HepG2 (cell line): ENCODE measurements at regions of chr2 and their contacts with region 1.

Region 1: GRCh38 chr2:27095745-27096651 is 9.4 kb downstream of the KHK start:
- DNase-seq: peak; percentile 97
- ATAC-seq: peak; percentile 64
- H3K4me3 ChIP-seq: peak overlapping the region; percentile 33 to 61 (median 35); a peak in 5 of 6 replicates
- H3K27ac ChIP-seq: peak overlapping the region; percentile 97
- H3K4me1 ChIP-seq: peaks cover 62% of the 10 kb centered on the region
- H3K27me3 ChIP-seq: no peaks in the 10 kb centered on the region
- CTCF ChIP-seq: peak; percentile 22
- EP300 ChIP-seq: peak; percentile 88 to 89
- POLR2A ChIP-seq: 0 out of 4 replicates have a peak, but pooled peaks of 1 of the 2 experiments have one; percentile 30
- RAD21 ChIP-seq: peak; percentile 47; the same call in 1 of the 2 replicates

Region 2: GRCh38 chr2:26785431-26786206 is 310.4 kb before region 1 on chr2 and contains the start of gene CENPA:
- CTCF ChIA-PET with region 1: no interaction called
- POLR2A ChIA-PET with region 1: no interaction called
- in situ Hi-C with region 1: no loop called
- intact Hi-C with region 1: loop called (anchors 5 kb)
- DNase-seq: peak; percentile 100
- ATAC-seq: peak; percentile 99
- H3K4me3 ChIP-seq: peak within 1 kb of the TSS; percentile 91 to 92 (median 91)
- H3K27ac ChIP-seq: peak within 1 kb of the TSS; percentile 60
- H3K4me1 ChIP-seq: peaks cover 51% of the 10 kb centered on the region
- H3K27me3 ChIP-seq: no peaks in the 10 kb centered on the region; a peak in 1 of 5 replicates
- CTCF ChIP-seq: peak; percentile 26
- EP300 ChIP-seq: peak in 1 of 2 experiments; percentile 6; a peak in 1 of 4 replicates
- POLR2A ChIP-seq: peak; percentile 68 to 70
- RAD21 ChIP-seq: peak; percentile 63
- total RNA-seq, gene CENPA: 38.5 and 45.8 TPM in 2 replicates

Region 3: GRCh38 chr2:27065128-27065527 is 30.9 kb before region 1 on chr2:
- CTCF ChIA-PET with region 1: no interaction called
- POLR2A ChIA-PET with region 1: interaction called, 14 read pairs
- in situ Hi-C with region 1: no loop called
- intact Hi-C with region 1: no loop called
- DNase-seq: no peak
- ATAC-seq: no peak
- H3K4me3 ChIP-seq: no peak overlapping the region
- H3K27ac ChIP-seq: no peak overlapping the region
- H3K4me1 ChIP-seq: peaks cover 20% of the 10 kb centered on the region
- H3K27me3 ChIP-seq: no peaks in the 10 kb centered on the region
- CTCF ChIP-seq: no peak
- EP300 ChIP-seq: no peak
- POLR2A ChIP-seq: no peak
- RAD21 ChIP-seq: no peak

Region 4: DNA sequence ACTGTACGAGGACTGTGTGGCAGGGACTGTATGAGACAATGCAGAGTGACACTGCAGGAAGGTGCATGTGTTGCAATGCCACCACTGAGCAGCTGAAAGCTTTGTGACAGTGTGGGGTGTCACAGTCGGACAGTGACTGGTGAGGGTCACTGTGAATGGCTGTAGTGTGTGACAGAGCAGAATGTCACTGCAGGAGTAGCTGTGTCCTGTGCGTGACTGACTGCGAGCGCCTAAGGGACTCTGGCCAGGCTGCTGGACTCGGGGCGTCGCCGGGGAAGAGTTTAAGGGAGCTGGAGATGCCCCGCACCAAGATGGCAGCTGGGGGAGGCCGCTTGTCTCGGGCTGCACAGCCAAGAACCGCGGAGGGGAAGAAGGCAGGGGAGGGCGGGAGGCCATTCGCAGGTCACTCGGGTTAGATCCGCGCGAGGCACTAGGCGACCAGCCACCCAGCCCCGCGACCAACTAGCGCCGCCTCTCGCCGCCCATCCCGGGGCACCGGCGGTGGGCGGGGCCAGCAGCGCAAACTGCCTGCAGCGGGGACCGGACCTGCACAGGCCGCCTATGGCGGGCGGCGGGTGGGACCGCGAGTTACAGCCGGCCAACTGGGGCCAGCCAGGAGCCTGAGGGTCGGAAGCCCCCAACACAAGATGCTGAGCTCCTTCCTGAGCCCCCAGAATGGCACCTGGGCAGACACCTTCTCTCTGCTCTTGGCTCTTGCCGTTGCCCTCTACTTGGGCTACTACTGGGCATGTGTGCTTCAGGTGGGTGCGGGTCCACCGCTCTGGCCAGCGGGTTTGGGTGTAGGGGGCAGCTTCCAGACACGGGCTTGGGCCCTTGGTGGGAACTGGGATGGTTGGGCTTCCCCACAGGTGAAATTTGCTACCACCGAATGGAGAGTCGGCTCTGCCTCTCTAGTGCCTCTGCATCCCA is 27.6 kb after region 1 on chr2 and contains the start of gene ABHD1:
- CTCF ChIA-PET with region 1: no interaction called
- POLR2A ChIA-PET with region 1: interaction called, 13 read pairs
- in situ Hi-C with region 1: no loop called
- intact Hi-C with region 1: no loop called
- DNase-seq: peak; percentile 59
- ATAC-seq: peak; percentile 78
- H3K4me3 ChIP-seq: peak within 1 kb of the TSS; percentile 46 to 80 (median 62)
- H3K27ac ChIP-seq: no peak within 1 kb of the TSS
- H3K4me1 ChIP-seq: peaks cover 60% of the 10 kb centered on the region
- H3K27me3 ChIP-seq: peaks cover 2 to 42% of the 10 kb centered on the region in 2 experiments; a peak in 4 of 5 replicates
- CTCF ChIP-seq: peak; percentile 73
- EP300 ChIP-seq: no peak
- POLR2A ChIP-seq: peak; percentile 27 to 90
- RAD21 ChIP-seq: 0 out of 2 replicates have a peak, but pooled peaks have one; percentile 45
- total RNA-seq, gene ABHD1: 0.04 TPM in 1 of 2 replicates, not detected in the other

Region 5: GRCh38 chr2:27174316-27175040 is 78.5 kb after region 1 on chr2:
- CTCF ChIA-PET with region 1: no interaction called
- POLR2A ChIA-PET with region 1: interaction called, 10 read pairs
- in situ Hi-C with region 1: no loop called
- intact Hi-C with region 1: loop called (anchors 1 kb)
- DNase-seq: no peak
- ATAC-seq: no peak
- H3K4me3 ChIP-seq: no peak overlapping the region
- H3K27ac ChIP-seq: peak overlapping the region; percentile 43
- H3K4me1 ChIP-seq: peaks cover 98% of the 10 kb centered on the region
- H3K27me3 ChIP-seq: no peaks in the 10 kb centered on the region
- CTCF ChIP-seq: no peak
- EP300 ChIP-seq: no peak
- POLR2A ChIP-seq: no peak
- RAD21 ChIP-seq: no peak

Region 6: GRCh38 chr2:27211829-27212627 is 116.0 kb after region 1 on chr2 and contains the starts of genes ATRAID and SLC5A6:
- CTCF ChIA-PET with region 1: no interaction called
- POLR2A ChIA-PET with region 1: interaction called, 13 read pairs
- in situ Hi-C with region 1: no loop called
- intact Hi-C with region 1: loop called (anchors 5 kb)
- DNase-seq: peak; percentile 82
- ATAC-seq: peak; percentile 91
- H3K4me3 ChIP-seq: peak within 1 kb of the TSS; percentile 87 to 93 (median 89)
- H3K27ac ChIP-seq: peak within 1 kb of the TSS; percentile 97
- H3K4me1 ChIP-seq: peaks cover 67% of the 10 kb centered on the region
- H3K27me3 ChIP-seq: no peaks in the 10 kb centered on the region; a peak in 1 of 5 replicates
- CTCF ChIP-seq: no peak; the same call in 1 of the 2 replicates
- EP300 ChIP-seq: peak in 1 of 2 experiments; percentile 11; a peak in 1 of 4 replicates
- POLR2A ChIP-seq: peak; percentile 95 to 98
- RAD21 ChIP-seq: peak; percentile 71
- total RNA-seq, gene ATRAID: 130 and 207 TPM in 2 replicates
- total RNA-seq, gene SLC5A6: 73.9 and 135 TPM in 2 replicates

Region 7: DNA sequence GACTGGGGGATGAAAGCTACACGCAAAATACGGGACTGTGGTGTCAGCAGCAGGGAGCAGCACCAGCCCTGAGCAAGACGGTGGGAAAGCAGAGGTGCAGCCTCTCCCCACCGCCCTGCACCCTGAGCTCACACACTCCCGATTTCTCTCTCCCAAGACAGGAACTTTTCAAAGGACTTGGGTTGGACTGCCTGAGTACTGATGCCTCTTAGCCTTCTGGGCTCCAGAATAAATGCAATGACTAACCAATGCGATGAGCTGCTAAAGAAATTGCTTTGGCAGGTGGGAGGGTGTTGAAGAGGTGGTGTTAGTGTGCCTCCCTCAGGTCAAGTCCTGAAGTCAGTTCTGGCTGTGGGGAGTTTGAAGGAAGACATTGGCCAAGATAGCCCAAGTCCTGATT is 195.9 kb after region 1 on chr2:
- CTCF ChIA-PET with region 1: interaction called, 3 read pairs
- POLR2A ChIA-PET with region 1: interaction called, 4 read pairs
- in situ Hi-C with region 1: no loop called
- intact Hi-C with region 1: loop called (anchors 5 kb)
- DNase-seq: peak; percentile 44
- ATAC-seq: peak; percentile 78
- H3K4me3 ChIP-seq: peak overlapping the region; percentile 13 to 52 (median 25); a peak in 2 of 6 replicates
- H3K27ac ChIP-seq: no peak overlapping the region
- H3K4me1 ChIP-seq: peaks cover 82% of the 10 kb centered on the region
- H3K27me3 ChIP-seq: no peaks in the 10 kb centered on the region
- CTCF ChIP-seq: peak; percentile 78
- EP300 ChIP-seq: no peak
- POLR2A ChIP-seq: no peak
- RAD21 ChIP-seq: no peak; the same call in 1 of the 2 replicates

Region 8: GRCh38 chr2:27309651-27310050 is 213.7 kb after region 1 on chr2:
- CTCF ChIA-PET with region 1: no interaction called
- POLR2A ChIA-PET with region 1: no interaction called
- in situ Hi-C with region 1: no loop called
- intact Hi-C with region 1: no loop called
- DNase-seq: no peak
- ATAC-seq: no peak
- H3K4me3 ChIP-seq: no peak overlapping the region
- H3K27ac ChIP-seq: no peak overlapping the region
- H3K4me1 ChIP-seq: peaks cover 32% of the 10 kb centered on the region
- H3K27me3 ChIP-seq: peaks cover 0 to 2% of the 10 kb centered on the region in 2 experiments; a peak in 2 of 5 replicates
- CTCF ChIP-seq: no peak
- EP300 ChIP-seq: no peak
- POLR2A ChIP-seq: no peak
- RAD21 ChIP-seq: no peak